ENCODE measurements at regions of chr6 and their contacts with region 1.

Region 1: GRCh38 chr6:18122124-18123093 is at the start of gene NHLRC1:
- DNase-seq: peak; percentile 87
- H3K4me3 Mint-ChIP-seq: peak within 1 kb of the TSS; percentile 57
- H3K27ac Mint-ChIP-seq: no peak within 1 kb of the TSS
- H3K4me1 Mint-ChIP-seq: peaks cover 13% of the 10 kb centered on the region
- H3K27me3 Mint-ChIP-seq: peaks cover 24% of the 10 kb centered on the region
- total RNA-seq, gene NHLRC1: 0.10 to 0.19 TPM

Region 2: GRCh38 chr6:17156112-17156921 is 966.1 kb before region 1 on chr6:
- CTCF ChIA-PET with region 1: no interaction called
- POLR2A ChIA-PET with region 1: no interaction called
- intact Hi-C with region 1: loop called (anchors 2 kb)
- DNase-seq: peak; percentile 53
- H3K4me3 Mint-ChIP-seq: no peak overlapping the region
- H3K27ac Mint-ChIP-seq: no peak overlapping the region
- H3K4me1 Mint-ChIP-seq: no peaks in the 10 kb centered on the region
- H3K27me3 Mint-ChIP-seq: peaks cover 8% of the 10 kb centered on the region

Region 3: GRCh38 chr6:18147160-18147559 is 24.8 kb after region 1 on chr6:
- CTCF ChIA-PET with region 1: no interaction called
- POLR2A ChIA-PET with region 1: no interaction called
- intact Hi-C with region 1: no loop called
- DNase-seq: peak; percentile 13
- H3K4me3 Mint-ChIP-seq: no peak overlapping the region
- H3K27ac Mint-ChIP-seq: no peak overlapping the region
- H3K4me1 Mint-ChIP-seq: peaks cover 10% of the 10 kb centered on the region
- H3K27me3 Mint-ChIP-seq: no peaks in the 10 kb centered on the region

Measured in activated CD4-positive, alpha-beta memory T cell treated with anti-CD3 and anti-CD28 coated beads for 36 hours (primary cell).